ENCODE measurements at regions of chr9 and their contacts with region 1.

Region 1: GRCh38 chr9:121322037-121322775 is 47.8 kb downstream of the STOM start:
- DNase-seq: no peak
- H3K4me3 ChIP-seq: no peak overlapping the region
- H3K27ac ChIP-seq: no peak overlapping the region
- H3K4me1 ChIP-seq: no peaks in the 10 kb centered on the region
- CTCF ChIP-seq: no peak

Region 2: DNA sequence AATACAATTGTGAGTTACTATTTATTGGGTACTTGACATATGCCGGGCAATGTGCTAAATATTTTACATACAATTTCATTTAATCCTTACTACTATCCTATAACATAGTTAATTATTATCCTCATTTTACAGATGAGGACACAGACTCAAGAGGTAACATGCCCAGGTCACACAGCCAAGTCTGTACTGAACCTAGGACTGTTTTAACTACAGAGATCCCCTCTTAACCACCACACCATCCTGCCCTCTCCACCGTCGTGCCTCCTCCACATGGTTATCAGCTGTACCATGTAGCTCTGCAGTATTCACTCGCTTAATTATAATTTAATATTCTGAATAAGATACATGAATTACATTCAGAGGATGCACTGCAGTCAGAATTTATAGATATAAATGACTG is 125.8 kb before region 1 on chr9:
- CTCF ChIA-PET with region 1: no interaction called
- POLR2A ChIA-PET with region 1: no interaction called
- intact Hi-C with region 1: no loop called
- DNase-seq: no peak
- H3K4me3 ChIP-seq: no peak overlapping the region
- H3K27ac ChIP-seq: no peak overlapping the region
- H3K4me1 ChIP-seq: peaks cover 81% of the 10 kb centered on the region
- CTCF ChIP-seq: no peak

Region 3: DNA sequence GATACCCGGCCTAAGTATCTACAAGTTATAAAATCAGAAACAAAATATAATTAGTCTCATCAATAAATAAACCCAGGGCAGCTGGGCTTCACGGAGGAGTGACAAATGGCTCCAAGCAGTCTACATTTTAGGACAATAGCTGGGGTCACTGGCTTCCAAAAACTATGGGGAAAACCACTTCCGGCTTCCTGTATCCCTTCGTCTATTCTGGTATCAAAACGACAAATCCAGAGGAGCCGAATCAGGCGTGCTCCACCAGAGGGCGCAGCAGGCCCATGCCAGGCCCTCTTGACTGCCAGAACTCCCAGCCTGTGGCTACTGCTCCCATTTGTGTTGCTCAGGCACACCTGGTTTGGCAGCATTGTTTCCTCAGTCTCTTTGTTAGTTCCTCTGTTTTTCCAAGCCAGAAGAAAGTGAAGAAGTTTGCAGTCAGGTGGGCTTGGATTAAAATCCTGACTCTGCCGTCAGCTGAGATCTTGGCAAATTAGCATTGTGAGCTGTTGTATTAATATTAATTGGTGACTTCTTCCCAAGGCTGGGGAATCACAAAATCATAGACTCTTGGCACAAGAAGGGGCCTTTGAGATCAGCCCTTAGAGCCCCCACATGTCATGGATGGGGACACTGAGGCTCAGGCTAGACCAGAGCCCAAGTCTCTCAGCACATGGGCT is 108.9 kb before region 1 on chr9:
- CTCF ChIA-PET with region 1: no interaction called
- POLR2A ChIA-PET with region 1: no interaction called
- intact Hi-C with region 1: loop called (anchors 1 kb)
- DNase-seq: peak; percentile 84
- H3K4me3 ChIP-seq: no peak overlapping the region
- H3K27ac ChIP-seq: no peak overlapping the region
- H3K4me1 ChIP-seq: peaks cover 20% of the 10 kb centered on the region
- CTCF ChIP-seq: peak; percentile 97

Region 4: DNA sequence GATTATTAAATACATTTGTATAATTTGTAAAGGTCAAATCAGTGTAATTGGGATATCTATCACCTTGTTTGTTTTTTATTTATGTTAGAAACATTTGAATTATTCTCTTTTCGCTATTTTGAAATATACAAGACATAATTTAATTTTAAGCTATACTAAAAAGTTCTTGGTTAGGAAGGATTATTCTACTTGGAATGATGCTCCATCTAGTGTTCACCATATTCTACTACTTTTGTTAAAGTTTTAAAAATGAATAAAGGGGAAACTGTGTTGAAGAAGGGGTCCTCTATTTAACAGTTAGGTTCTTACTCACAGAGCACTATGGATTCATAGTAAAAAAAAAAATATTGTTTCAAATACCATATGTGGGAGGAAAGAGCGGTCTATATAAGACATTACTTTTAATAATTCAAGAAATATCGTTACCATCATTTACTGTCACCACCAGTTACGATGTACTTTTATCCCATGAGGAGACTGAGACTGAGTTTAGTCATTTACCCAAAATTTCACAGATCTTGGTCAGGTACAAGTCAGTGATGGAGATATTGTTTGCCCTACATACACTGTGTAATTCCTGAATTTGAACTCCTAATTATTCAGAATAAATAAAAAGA is 54.1 kb after region 1 on chr9:
- CTCF ChIA-PET with region 1: no interaction called
- POLR2A ChIA-PET with region 1: interaction called, 7 read pairs
- intact Hi-C with region 1: loop called (anchors 2 kb)
- DNase-seq: peak; percentile 19
- H3K4me3 ChIP-seq: no peak overlapping the region
- H3K27ac ChIP-seq: no peak overlapping the region
- H3K4me1 ChIP-seq: no peaks in the 10 kb centered on the region
- CTCF ChIP-seq: peak; percentile 75